HEK293 (cell line): ENCODE measurements at regions of chr7 and their contacts with region 1.

Region 1: DNA sequence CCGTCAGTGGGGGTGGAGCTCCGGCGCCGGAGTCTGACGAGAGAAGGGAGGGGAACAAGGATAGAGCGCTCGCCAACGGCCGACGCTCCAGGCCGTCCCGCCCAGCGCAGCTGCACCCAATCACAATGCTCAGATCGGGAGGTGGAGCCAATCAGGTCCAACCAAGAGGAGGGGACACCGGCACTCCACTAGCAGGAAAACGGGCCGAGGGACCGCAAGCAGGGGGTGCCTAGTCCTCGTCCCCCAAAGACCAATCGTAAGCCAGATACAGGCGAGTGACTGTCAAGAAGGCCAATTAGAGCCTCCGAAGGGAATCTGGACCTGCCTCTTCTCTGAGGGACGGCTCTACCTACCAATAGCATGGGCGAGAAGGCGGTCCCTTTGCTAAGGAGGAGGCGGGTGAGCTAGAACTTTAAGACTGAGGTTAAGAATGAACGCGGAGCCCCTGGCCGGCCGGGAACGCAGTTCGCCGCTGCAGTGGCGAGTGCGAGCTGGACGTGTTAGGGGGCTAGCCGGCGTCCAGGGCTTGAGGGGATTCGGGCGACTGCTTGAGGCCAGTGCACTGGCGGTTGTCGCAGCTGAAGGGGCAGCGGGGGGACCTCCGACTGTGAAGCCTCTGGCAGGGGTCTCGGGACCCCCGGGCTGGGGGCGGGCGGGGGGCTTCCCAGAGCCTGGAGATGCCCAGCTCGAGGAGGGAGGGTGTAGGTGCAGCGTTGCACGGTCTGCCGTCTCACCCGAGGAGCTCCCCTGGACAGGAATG is at the start of gene FBXO24:
- H3K4me3 ChIP-seq: peak within 1 kb of the TSS; percentile 90
- H3K27ac ChIP-seq: peak within 1 kb of the TSS; percentile 73
- H3K4me1 ChIP-seq: peaks cover 12% of the 10 kb centered on the region
- CTCF ChIP-seq: no peak

Region 2: DNA sequence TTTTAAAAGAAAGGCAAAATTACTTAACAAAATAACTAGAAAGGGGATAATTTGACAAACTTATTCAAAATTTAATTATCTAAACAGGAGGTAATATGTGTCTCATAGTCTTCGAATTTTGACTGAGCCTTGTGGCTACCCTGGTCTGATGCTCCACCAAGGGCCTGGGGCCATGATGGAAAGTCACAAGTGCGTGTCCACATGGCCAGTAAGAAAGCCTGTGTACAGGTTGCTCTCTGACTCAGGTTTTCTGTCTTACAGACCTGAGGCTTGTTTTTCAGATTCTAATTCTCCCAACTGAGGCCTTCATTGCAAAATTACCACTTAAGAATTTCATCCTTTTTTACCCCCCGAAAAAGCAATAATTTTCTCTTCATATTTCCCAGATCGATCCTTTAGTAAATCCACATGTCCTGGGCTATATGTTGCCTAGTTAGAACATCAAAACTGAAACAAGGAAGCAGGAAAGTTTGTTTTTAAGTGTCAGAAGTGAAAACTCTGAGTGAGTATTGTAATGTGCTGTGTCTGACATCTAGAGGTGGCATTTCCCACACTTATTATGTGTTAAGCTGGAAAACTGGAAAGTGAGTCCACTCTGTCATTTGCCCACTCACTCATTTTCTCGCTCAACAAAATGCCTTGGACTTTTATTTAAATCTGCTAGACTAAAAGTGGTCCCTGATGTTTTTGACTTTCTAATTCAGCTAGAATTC is 748.6 kb before region 1 on chr7:
- CTCF ChIA-PET with region 1: no interaction called
- POLR2A ChIA-PET with region 1: no interaction called
- H3K4me3 ChIP-seq: no peak overlapping the region
- H3K27ac ChIP-seq: no peak overlapping the region
- H3K4me1 ChIP-seq: no peaks in the 10 kb centered on the region
- CTCF ChIP-seq: peak; percentile 26; the same call in 1 of the 2 replicates

Region 3: GRCh38 chr7:100435401-100436304 is 150.8 kb before region 1 on chr7:
- CTCF ChIA-PET with region 1: no interaction called
- POLR2A ChIA-PET with region 1: interaction called, 39 read pairs
- H3K4me3 ChIP-seq: peak overlapping the region; percentile 84
- H3K27ac ChIP-seq: peak overlapping the region; percentile 97
- H3K4me1 ChIP-seq: peaks cover 4% of the 10 kb centered on the region
- CTCF ChIP-seq: peak; percentile 39; the same call in 1 of the 2 replicates

Region 4: DNA sequence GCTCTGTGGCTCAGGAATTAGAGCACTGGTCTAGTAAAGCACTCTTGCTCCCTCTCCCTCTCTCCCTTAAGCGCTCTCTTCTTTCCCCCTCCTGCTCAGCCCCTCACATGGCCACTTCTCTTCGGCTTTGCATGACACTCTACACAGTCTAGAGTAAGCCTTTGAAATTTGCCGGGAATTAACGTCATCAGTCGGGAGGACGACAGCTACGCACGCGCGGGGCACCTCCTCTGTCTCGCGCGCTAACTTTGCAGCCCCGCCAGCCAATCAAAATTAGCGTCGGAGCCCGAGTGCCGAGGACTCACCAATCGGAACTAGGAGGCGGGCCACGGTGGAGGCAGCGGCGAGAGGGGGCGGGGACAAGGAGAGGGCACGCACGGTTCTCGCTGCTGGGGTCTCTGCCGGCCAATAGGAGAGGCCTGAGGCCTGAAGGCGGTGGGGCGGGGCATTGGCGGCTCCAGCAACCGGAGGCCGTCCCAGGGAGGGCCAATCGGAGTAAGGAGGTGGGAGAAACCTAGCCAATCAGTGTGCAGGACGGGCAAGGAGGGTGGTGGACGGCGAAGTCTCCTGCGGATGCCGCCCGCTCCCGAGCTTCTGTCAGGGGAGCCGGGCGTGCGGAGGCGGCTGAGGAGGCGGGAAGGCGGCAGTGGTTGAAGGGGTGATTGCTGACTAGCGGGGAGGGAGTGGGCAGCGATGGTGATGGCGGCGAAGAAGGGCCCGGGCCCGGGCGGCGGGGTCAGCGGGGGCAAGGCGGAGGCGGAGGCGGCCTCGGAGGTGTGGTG is 47.6 kb before region 1 on chr7 and contains the start of gene AGFG2:
- CTCF ChIA-PET with region 1: interaction called, 3 read pairs
- POLR2A ChIA-PET with region 1: interaction called, 16 read pairs
- H3K4me3 ChIP-seq: peak within 1 kb of the TSS; percentile 79
- H3K27ac ChIP-seq: peak within 1 kb of the TSS; percentile 34; the same call in 1 of the 2 replicates
- H3K4me1 ChIP-seq: peaks cover 3% of the 10 kb centered on the region; the same call in 1 of the 2 replicates
- CTCF ChIP-seq: 0 out of 2 replicates have a peak, but pooled peaks have one; percentile 16

Region 5: DNA sequence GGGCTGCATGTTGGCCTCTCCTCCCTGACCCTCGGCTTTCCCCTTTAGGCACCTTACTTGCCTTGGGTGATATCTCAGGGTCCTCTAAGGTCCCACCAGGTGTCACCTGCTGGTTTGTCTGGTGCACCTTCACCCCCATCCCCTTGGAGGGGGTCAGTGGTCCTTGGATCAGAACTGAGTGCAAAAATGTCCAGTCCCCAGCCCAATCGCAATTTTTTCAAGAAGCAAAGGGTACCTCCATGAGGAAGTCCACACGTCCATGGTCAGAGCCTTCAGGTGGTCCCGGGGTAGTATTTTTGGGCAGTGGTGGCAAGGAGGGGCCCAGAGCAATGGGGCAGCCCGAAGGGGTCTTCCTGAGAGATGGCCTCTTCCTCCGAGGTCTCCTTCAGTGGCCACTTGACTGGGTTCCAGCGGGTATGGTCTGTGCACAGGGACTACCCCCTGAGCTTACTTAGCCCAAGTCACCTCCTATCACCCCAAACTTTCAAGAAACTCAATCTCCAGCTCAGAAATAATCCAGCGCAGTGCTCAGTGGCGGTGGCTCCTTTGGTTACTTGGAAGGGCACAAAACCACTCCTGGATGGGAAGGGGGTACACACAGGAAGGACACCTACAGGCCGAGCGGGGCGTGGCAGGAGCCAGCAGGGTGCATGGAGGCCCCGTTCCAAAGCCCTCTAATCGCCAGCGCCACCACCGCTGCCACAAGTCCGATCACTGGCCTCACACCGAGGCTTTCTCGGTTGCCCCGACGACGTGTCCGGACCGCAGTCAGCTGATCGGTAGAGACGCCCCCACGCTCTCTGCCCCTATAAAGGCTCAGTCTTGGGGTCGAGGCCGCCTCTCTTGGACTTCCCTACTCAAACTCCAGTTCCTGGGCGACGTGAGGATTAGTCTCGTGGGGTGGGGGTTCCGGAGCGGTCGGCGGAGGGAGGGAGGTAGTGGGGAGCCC is 17.3 kb before region 1 on chr7:
- CTCF ChIA-PET with region 1: interaction called, 15 read pairs
- POLR2A ChIA-PET with region 1: interaction called, 30 read pairs
- H3K4me3 ChIP-seq: no peak overlapping the region
- H3K27ac ChIP-seq: no peak overlapping the region
- H3K4me1 ChIP-seq: peaks cover 2% of the 10 kb centered on the region; the same call in 1 of the 2 replicates
- CTCF ChIP-seq: peak; percentile 87

Region 6: GRCh38 chr7:100626530-100627237 is 40.2 kb after region 1 on chr7:
- CTCF ChIA-PET with region 1: interaction called, 6 read pairs
- POLR2A ChIA-PET with region 1: interaction called, 28 read pairs
- H3K4me3 ChIP-seq: peak overlapping the region; percentile 11
- H3K27ac ChIP-seq: no peak overlapping the region
- H3K4me1 ChIP-seq: no peaks in the 10 kb centered on the region
- CTCF ChIP-seq: no peak

Region 7: DNA sequence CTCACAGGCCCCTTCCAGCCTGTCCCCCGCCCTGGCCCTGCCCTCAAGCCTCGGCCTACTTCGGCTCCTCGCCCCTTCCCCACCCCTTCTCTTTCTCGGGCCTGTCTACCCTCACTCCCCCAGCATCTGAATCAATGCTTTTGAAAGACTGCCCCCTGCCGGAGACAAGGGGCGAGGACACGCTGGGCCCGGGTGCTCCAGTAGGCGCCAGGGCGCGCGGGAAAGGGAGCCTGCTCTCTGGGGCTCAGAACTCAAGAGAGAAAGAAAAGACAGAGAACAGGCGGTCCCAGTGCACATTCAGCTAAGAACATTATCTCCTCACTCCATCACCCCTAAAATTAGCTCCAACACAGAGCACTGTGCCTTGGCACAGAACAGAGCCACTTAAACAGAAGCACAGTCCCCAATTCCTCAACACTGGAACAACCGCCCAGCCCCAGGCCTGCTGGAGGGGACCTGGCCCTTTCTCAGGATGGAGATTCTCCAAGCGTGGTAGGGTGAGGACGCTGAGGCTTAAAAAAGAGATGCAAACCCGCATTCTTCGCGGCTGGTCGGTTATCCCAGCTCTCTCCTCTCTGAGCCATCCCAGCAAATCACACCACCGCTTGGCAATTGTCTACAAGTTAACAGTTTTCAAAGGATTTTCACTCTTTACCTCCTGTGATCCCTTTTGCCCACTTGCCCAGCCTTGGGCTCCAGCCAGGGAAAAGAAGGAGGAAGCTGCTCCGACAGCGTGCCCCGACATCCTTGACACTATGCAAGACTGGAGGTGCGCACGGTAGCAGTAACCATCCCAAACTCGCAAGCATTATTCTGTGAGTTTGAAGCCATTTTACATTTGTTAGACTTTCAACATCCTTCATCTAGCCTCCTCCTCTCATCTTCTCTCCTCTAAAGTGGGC is 105.5 kb after region 1 on chr7:
- CTCF ChIA-PET with region 1: interaction called, 25 read pairs
- POLR2A ChIA-PET with region 1: interaction called, 18 read pairs
- H3K4me3 ChIP-seq: peak overlapping the region; percentile 6; the same call in 1 of the 2 replicates
- H3K27ac ChIP-seq: peak overlapping the region; percentile 25; the same call in 1 of the 2 replicates
- H3K4me1 ChIP-seq: peaks cover 2% of the 10 kb centered on the region; the same call in 1 of the 2 replicates
- CTCF ChIP-seq: peak; percentile 93

Region 8: DNA sequence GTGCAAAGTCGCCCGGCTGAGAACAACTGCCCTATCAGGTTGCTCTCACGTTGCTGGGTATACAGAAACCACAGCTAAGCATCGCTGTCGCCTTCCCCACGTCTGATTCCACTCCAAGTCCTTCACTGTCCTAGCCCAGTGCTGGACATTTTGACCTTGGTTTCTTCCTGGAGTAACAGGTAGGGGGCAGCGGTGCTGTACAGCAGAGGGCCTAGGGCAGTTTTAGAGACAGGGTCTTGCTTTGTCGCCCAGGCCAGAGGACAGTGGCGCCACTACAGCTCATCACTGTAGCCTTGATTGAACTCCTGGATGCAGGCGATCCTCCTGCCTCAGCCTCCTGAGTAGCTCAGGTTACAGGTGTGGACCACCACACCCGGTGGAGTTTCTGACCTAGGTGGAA is 648.6 kb after region 1 on chr7:
- CTCF ChIA-PET with region 1: no interaction called
- POLR2A ChIA-PET with region 1: no interaction called
- H3K4me3 ChIP-seq: no peak overlapping the region
- H3K27ac ChIP-seq: no peak overlapping the region
- H3K4me1 ChIP-seq: no peaks in the 10 kb centered on the region
- CTCF ChIP-seq: peak; percentile 48; the same call in 1 of the 2 replicates